Activated CD8-positive, alpha-beta T cell treated with anti-CD3 and anti-CD28 coated beads, Interleukin-2, amount 10 ng/mL, durations not matched to agents 7 days and 5 days (primary cell): ENCODE measurements at regions of chr3 and their contacts with region 1.

Region 1: DNA sequence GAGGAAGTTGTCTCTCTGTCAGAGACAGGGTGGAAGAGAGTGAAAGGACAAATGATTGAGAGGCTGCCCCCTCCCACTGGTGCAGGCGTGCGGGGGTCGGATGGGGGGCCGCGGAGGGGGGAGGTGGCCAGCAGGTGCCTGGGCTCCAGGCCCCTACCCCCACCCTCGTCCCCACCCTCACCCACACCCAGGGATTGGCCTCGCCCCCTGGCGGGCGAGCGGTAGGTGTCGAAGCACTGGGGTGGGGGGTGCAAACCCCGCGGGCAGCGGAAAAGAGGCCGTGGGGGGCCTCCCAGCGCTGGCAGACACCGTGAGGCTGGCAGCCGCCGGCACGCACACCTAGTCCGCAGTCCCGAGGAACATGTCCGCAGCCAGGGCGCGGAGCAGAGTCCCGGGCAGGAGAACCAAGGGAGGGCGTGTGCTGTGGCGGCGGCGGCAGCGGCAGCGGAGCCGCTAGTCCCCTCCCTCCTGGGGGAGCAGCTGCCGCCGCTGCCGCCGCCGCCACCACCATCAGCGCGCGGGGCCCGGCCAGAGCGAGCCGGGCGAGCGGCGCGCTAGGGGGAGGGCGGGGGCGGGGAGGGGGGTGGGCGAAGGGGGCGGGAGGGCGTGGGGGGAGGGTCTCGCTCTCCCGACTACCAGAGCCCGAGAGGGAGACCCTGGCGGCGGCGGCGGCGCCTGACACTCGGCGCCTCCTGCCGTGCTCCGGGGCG is at the start of gene KAT2B:
- DNase-seq: peak; percentile 88
- ATAC-seq: peak; percentile 67
- H3K4me3 Mint-ChIP-seq: peak within 1 kb of the TSS; percentile 97
- H3K27ac Mint-ChIP-seq: peak within 1 kb of the TSS; percentile 95
- H3K4me1 Mint-ChIP-seq: peaks cover 54% of the 10 kb centered on the region
- H3K27me3 Mint-ChIP-seq: no peaks in the 10 kb centered on the region
- total RNA-seq, gene KAT2B: 112 to 120 TPM

Region 2: DNA sequence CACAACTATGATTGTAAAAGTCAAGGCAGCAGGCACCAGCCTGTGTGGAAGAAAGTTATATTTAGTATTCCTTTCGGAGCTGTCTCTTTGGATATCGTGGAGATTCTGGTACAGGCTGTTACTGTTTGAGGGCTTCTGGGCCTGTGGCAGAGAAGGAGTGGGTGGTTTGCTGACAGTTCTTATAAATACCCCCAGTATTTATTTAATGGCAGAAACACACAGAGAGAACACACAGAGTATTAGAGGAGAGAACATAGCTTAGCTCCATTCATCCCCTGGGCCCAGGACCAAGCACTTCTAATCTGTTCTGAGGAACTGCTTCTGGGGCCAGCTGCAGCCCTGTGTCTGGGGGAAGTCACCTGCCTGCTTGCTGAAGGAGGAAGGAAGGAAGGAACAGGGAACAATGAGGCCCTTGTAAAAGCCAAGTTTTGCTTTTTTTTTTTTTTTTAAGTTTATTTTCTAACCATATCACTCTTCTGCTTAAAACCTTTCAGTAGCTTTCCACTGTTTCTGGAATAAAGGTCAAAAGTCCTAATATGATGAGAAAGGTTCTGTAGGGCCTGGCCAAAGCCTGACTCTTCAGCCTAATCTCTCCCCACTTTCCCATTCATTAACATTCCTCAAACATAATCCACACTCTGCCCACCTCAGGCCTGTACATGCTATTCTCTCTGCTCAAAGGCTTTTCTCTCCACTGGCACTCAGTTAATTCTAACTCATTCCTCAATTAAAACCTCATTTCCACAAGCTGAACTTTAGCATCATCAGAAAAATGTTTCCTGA is 16.1 kb before region 1 on chr3:
- CTCF ChIA-PET with region 1: no interaction called
- POLR2A ChIA-PET with region 1: no interaction called
- DNase-seq: no peak
- ATAC-seq: no peak
- H3K4me3 Mint-ChIP-seq: no peak overlapping the region
- H3K27ac Mint-ChIP-seq: no peak overlapping the region
- H3K4me1 Mint-ChIP-seq: peaks cover 8% of the 10 kb centered on the region
- H3K27me3 Mint-ChIP-seq: no peaks in the 10 kb centered on the region

Region 3: GRCh38 chr3:20077068-20077467 is 37.1 kb after region 1 on chr3:
- CTCF ChIA-PET with region 1: no interaction called
- POLR2A ChIA-PET with region 1: no interaction called
- DNase-seq: no peak
- ATAC-seq: peak; percentile 29
- H3K4me3 Mint-ChIP-seq: no peak overlapping the region
- H3K27ac Mint-ChIP-seq: peak overlapping the region; percentile 44
- H3K4me1 Mint-ChIP-seq: peaks cover 29% of the 10 kb centered on the region
- H3K27me3 Mint-ChIP-seq: no peaks in the 10 kb centered on the region

Region 4: DNA sequence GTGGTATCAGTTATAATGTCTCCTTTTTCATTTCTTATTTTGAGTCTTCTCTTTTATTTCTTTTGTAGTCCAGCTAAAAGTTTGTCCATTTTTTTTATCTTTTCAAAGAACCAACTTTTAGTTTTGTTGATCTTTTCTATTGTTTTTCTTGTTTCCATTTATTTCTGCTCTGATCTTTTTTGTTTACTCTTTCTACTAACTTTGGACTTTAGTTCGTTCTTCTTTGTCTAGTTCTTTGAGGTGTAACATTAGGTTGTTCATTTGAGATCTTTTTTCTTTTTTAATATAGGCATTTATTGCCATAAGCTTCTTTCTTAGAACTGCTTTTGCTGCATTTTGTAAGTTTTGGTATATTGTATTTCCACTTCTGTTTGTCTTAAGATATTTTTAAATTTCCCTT is 51.4 kb after region 1 on chr3:
- CTCF ChIA-PET with region 1: no interaction called
- POLR2A ChIA-PET with region 1: no interaction called
- DNase-seq: no peak
- ATAC-seq: no peak
- H3K4me3 Mint-ChIP-seq: no peak overlapping the region
- H3K27ac Mint-ChIP-seq: peak overlapping the region; percentile 51
- H3K4me1 Mint-ChIP-seq: peaks cover 27% of the 10 kb centered on the region
- H3K27me3 Mint-ChIP-seq: no peaks in the 10 kb centered on the region

Region 5: DNA sequence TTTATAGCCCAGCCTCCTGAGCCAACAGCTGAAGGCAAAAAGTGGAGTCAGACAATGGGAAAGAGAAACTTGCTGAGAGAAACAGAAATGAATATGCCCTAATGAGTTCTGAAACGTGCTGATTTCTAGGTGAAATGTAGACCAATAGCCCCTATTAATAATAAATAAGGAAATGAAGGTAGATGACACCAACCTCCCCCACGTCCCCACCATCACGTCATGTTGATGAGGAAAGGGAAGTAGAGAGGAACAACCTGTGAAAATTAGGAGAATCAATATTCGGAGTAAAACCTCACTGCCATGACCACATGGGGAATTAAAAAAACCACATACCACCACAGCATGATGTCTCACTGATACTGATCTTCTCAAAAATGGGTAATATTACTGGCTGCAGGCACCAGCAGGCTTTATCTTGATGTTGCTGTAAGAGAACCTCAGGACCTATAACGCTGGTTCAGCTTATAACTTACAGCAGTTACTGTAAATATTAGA is 64.3 kb after region 1 on chr3:
- CTCF ChIA-PET with region 1: interaction called, 14 read pairs
- POLR2A ChIA-PET with region 1: interaction called, 17 read pairs
- DNase-seq: peak; percentile 84
- ATAC-seq: peak; percentile 89
- H3K4me3 Mint-ChIP-seq: peak overlapping the region; percentile 64
- H3K27ac Mint-ChIP-seq: peak overlapping the region; percentile 88
- H3K4me1 Mint-ChIP-seq: peaks cover 89% of the 10 kb centered on the region
- H3K27me3 Mint-ChIP-seq: no peaks in the 10 kb centered on the region

Region 6: DNA sequence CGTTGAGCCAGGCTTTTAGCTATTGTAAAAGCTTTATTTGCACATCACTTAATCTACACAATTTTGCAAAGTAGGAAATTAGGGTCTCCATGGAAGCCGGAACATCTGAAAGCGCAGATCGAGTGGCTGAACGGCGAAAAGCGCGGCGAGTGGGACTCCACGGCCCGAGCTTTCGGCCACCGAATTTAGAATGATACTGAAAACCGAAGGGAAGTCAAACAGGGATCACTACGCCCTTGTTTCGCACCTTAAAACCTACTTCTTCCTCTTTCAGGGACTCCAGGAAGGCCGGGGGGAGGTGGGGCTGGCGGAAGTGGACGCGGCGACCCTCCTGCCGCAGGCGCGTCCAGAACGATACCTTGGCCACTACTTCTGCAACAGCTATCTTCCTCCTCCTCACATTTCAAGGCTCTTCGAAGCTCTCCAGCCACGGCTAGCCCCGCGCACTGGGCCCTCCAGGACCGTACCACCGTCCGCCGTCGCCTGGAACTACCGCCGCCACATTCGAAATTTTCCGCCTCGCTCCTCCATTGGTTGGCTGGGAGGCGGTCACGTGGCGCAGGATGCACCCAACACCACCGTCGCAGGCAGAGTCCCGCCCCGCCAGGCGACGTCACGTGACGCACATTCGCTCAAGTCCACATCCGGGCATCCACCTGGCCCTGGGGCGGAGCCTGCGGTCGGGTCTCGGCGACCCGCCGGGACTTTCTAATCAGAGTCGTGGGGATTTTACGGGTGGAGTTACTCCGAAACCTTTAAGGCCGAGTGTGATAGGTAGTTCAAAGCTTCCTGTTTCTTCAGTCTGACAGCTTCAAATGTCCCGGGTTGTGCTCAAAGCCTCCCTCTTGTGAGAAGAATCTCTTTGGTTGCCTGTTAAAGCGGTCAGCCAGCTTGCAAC is 146.0 kb after region 1 on chr3 and contains the start of gene SGO1:
- CTCF ChIA-PET with region 1: interaction called, 4 read pairs
- POLR2A ChIA-PET with region 1: interaction called, 48 read pairs
- DNase-seq: peak; percentile 100
- ATAC-seq: peak; percentile 94
- H3K4me3 Mint-ChIP-seq: no peak within 1 kb of the TSS
- H3K27ac Mint-ChIP-seq: no peak within 1 kb of the TSS
- H3K4me1 Mint-ChIP-seq: peaks cover 24% of the 10 kb centered on the region
- H3K27me3 Mint-ChIP-seq: no peaks in the 10 kb centered on the region
- total RNA-seq, gene SGO1: 43.6 to 43.7 TPM

Region 7: DNA sequence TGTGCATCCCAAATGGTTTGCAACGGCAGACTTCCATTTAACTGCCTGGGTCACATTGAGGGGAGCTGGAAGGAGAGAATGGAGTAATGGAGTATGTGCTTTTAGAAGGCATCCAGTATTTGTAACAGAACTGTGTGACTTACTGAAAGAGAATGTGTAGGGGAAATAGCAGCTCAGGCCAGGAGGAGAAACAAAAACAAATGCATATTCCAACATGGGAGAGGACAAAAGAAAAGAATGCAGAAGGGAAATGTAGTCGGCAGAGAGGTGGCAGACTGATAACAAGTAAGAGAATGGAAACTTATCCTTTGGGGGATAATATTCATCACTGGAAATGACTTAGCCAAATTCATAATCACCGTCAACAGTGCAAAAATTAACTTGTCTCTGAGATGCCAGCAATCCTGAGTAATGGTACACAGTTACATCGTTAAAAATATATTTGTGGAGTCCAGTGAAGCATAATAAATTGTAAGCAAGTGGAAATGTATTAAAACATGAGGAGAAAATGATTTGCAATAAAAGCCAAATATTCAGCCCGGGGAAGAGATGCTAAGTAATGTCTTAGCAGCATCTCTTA is 441.0 kb after region 1 on chr3:
- CTCF ChIA-PET with region 1: no interaction called
- POLR2A ChIA-PET with region 1: no interaction called
- DNase-seq: no peak
- ATAC-seq: no peak
- H3K4me3 Mint-ChIP-seq: no peak overlapping the region
- H3K27ac Mint-ChIP-seq: no peak overlapping the region
- H3K4me1 Mint-ChIP-seq: no peaks in the 10 kb centered on the region
- H3K27me3 Mint-ChIP-seq: no peaks in the 10 kb centered on the region